CD8-positive, alpha-beta T cell (primary cell): ENCODE measurements at regions of chr6 and their contacts with region 1.

Region 1: DNA sequence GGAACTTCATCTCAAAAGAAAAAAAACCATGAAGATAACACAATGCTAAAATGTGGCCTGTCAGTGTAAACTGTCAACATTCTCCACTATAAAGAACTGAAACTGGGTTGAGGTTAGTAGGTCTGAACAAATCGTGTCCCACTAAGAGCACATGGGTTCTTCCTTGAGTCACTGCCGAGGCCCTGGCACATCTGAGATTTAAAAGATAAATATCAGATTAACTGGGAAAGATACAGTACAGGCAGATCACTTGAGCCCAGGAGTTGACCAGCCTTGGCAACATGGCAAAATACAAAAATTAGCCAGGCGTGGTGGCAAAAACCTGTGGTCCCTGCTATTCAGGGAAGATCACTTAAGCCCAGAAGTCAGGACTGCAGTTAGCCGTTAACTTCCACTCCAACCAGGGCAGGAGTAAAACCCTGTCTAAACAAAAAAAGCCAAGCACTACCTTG is 5.6 kb downstream of the EEF1A1 start:
- DNase-seq: peak in 3 of 9 experiments; percentile 12 to 48 (median 32)
- ATAC-seq: no peak
- H3K4me3 ChIP-seq: no peak overlapping the region
- H3K4me3 Mint-ChIP-seq: peak overlapping the region; percentile 37
- H3K27ac ChIP-seq: peak overlapping the region in 1 of 2 experiments; percentile 55
- H3K27ac Mint-ChIP-seq: peak overlapping the region; percentile 68
- H3K4me1 ChIP-seq: peaks cover 35% of the 10 kb centered on the region
- H3K4me1 Mint-ChIP-seq: peaks cover 50% of the 10 kb centered on the region
- H3K27me3 ChIP-seq: no peaks in the 10 kb centered on the region
- H3K27me3 Mint-ChIP-seq: no peaks in the 10 kb centered on the region
- CTCF ChIP-seq: no peak

Region 2: GRCh38 chr6:73353636-73354388 is 161.4 kb before region 1 on chr6 and contains the start of gene DPPA5:
- CTCF ChIA-PET with region 1: no interaction called
- POLR2A ChIA-PET with region 1: no interaction called
- intact Hi-C with region 1: no loop called
- DNase-seq: no peak
- ATAC-seq: no peak
- H3K4me3 ChIP-seq: no peak within 1 kb of the TSS
- H3K4me3 Mint-ChIP-seq: no peak within 1 kb of the TSS
- H3K27ac ChIP-seq: no peak within 1 kb of the TSS
- H3K27ac Mint-ChIP-seq: no peak within 1 kb of the TSS
- H3K4me1 ChIP-seq: no peaks in the 10 kb centered on the region
- H3K4me1 Mint-ChIP-seq: no peaks in the 10 kb centered on the region
- H3K27me3 ChIP-seq: peaks cover under 1 to 6% of the 10 kb centered on the region in 2 experiments
- H3K27me3 Mint-ChIP-seq: peaks cover 24% of the 10 kb centered on the region
- CTCF ChIP-seq: no peak
- total RNA-seq, gene DPPA5: not detected

Region 3: DNA sequence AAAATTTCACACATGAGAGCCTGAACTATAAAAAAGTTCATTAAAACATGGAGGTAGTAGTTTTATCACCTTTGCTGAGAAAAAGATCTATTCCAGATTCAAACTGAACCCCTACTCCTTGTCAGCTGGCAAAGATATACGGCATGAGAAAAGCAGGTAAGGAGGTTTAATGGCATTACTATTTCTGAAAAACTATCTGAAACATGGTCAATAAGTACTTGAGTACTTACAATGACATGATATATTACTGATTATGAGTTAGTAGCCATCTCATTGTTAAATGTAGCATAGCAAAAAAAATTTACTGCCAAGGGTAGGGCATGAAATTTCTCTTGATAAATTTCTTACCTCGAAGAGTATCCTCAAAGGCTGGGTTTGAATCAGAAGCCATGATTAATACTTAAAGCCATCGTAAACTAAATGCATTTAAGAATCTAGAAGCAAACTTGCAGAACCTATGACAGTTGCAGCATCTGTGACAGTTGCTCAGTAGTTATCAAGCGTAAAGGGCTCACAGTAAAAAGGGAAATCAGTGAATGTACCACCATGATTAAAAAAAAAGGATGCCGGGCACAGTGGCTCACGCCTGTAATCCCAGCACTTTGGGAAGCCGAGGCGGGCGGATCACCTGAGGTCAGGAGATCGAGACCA is 129.8 kb after region 1 on chr6:
- CTCF ChIA-PET with region 1: interaction called, 13 read pairs
- POLR2A ChIA-PET with region 1: no interaction called
- intact Hi-C with region 1: no loop called
- DNase-seq: peak in 1 of 9 experiments; percentile 6
- ATAC-seq: no peak
- H3K4me3 ChIP-seq: peak overlapping the region; percentile 13 to 20
- H3K4me3 Mint-ChIP-seq: peak overlapping the region; percentile 83
- H3K27ac ChIP-seq: no peak overlapping the region
- H3K27ac Mint-ChIP-seq: no peak overlapping the region
- H3K4me1 ChIP-seq: no peaks in the 10 kb centered on the region
- H3K4me1 Mint-ChIP-seq: peaks cover 15% of the 10 kb centered on the region
- H3K27me3 ChIP-seq: no peaks in the 10 kb centered on the region
- H3K27me3 Mint-ChIP-seq: no peaks in the 10 kb centered on the region
- CTCF ChIP-seq: no peak